HepG2 (cell line): ENCODE measurements at regions of chr11 and their contacts with region 1.

Region 1: GRCh38 chr11:37905707-37906417 is 1307.8 kb upstream of the RAG2 start:
- DNase-seq: no peak
- ATAC-seq: no peak
- H3K4me3 ChIP-seq: no peak overlapping the region
- H3K27ac ChIP-seq: no peak overlapping the region
- H3K4me1 ChIP-seq: no peaks in the 10 kb centered on the region
- H3K27me3 ChIP-seq: no peaks in the 10 kb centered on the region; a peak in 1 of 5 replicates
- CTCF ChIP-seq: no peak
- EP300 ChIP-seq: no peak
- POLR2A ChIP-seq: no peak
- RAD21 ChIP-seq: no peak

Region 2: DNA sequence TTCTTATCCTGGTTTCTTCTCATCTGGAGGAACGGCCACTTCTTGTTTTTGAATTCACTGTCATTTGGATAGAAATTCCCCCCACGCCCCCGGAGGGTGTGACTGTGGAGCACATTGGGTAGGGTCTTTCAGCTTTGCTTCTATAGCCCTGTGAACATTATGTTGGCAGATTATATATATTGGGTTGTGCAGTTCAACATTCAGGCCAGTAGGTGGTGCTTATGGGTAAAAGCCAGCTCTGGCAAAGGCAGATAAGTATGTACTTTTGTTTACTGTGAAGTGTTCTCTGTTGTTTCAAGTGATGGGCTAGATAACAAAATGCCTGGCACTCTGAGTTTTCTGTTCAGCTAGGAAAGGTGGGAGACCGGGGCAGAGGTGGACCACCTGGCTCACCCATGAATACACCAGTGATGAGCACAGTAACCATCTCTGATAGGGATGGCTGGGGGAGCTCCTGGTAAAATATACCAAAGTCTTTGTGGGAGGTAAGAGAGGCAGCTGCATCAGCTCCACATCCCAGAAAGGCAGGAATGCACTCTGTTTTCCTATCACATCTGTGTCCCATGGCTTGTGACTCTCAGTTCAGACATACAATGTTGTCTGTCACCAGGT is 40.4 kb after region 1 on chr11:
- CTCF ChIA-PET with region 1: no interaction called
- POLR2A ChIA-PET with region 1: no interaction called
- in situ Hi-C with region 1: no loop called
- intact Hi-C with region 1: loop called (anchors 1 kb)
- DNase-seq: peak; percentile 18
- ATAC-seq: peak; percentile 61
- H3K4me3 ChIP-seq: no peak overlapping the region
- H3K27ac ChIP-seq: no peak overlapping the region
- H3K4me1 ChIP-seq: no peaks in the 10 kb centered on the region
- H3K27me3 ChIP-seq: no peaks in the 10 kb centered on the region
- CTCF ChIP-seq: peak; percentile 32
- EP300 ChIP-seq: no peak
- POLR2A ChIP-seq: no peak
- RAD21 ChIP-seq: no peak